ENCODE measurements at regions of chr12 and their contacts with region 1.

Region 1: DNA sequence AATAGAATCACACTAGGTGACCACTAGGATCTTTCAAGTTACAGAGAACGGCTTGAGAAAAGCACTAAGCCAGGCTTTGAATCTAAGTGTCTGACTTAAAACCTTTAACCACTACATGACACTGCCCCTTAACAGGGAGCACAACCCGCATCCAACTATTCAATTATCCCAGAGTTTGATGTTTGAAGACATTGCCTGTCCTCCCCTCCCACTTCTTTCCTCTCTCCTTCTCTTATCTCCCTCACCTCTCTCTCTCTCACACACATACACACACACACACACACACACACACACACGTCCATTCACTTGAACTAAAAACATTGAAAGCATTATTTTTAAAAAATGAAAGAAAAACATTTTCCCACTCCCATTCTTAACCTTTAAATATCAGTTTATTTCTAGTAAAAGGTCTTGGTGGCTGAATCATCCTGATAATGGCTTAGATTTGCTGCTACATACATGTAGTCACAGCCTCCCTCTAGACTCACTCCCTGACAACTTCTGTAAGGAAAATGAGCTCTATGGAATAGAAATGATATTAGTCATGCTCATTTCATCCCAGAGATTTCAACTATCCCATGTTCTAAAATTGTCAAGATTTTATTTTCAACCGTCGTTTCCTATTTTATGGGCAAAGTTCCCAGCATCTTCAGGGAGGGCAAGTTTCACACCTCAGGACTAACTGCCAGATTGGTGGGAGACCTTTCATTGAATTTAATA is 53.5 kb upstream of the RAP1B start:
- DNase-seq: peak; percentile 52
- H3K4me3 ChIP-seq: no peak overlapping the region
- H3K27ac ChIP-seq: no peak overlapping the region
- H3K4me1 ChIP-seq: peaks cover 25% of the 10 kb centered on the region
- H3K27me3 ChIP-seq: no peaks in the 10 kb centered on the region
- CTCF ChIP-seq: no peak

Region 2: DNA sequence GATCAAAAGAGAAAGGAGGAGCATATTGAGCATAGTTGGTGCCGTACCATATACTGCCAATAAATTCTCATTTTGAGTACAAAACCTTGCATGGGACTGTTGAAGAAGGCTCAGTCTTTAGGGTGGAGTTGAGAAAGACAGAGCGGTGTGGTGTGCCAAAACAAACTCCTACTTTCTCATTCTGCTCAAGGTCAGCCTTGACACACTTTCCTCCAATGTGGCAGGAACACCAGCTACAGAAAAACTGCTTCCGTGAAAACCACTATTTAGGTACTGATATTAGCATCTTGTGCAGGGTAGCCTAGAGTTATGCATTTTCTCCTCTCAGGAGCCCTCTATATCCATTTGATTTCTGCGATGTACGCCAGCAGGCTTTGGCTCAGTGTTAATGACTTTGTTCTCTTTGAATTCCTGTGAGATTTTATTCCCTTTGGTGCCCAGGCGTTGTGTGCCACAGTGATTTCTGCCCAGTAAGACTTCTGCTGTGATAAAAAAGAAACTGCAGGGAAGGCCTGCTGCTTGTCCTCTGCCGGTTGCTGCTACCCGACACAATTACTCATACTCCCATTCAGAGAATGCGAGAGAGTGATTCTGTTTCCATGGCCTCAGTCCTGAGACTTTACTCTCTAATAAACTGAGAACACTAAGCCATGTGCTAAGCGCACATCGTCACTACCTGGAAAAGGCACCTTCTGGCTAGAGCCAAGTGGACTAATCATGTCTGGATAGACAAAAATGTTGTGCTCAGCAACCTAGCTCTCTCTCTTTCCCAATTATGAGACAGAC is 136.8 kb before region 1 on chr12:
- CTCF ChIA-PET with region 1: no interaction called
- dilution Hi-C with region 1: no loop called
- in situ Hi-C with region 1: no loop called
- intact Hi-C with region 1: no loop called
- DNase-seq: no peak
- H3K4me3 ChIP-seq: no peak overlapping the region
- H3K27ac ChIP-seq: no peak overlapping the region
- H3K4me1 ChIP-seq: no peaks in the 10 kb centered on the region
- H3K27me3 ChIP-seq: no peaks in the 10 kb centered on the region
- CTCF ChIP-seq: no peak

Region 3: GRCh38 chr12:68617160-68617926 is 60.2 kb after region 1 on chr12:
- CTCF ChIA-PET with region 1: interaction called, 13 read pairs
- dilution Hi-C with region 1: no loop called
- in situ Hi-C with region 1: no loop called
- intact Hi-C with region 1: no loop called
- DNase-seq: peak; percentile 67
- H3K4me3 ChIP-seq: peak overlapping the region in 1 of 3 experiments; percentile 21
- H3K27ac ChIP-seq: peak overlapping the region; percentile 65
- H3K4me1 ChIP-seq: peaks cover 49% of the 10 kb centered on the region
- H3K27me3 ChIP-seq: no peaks in the 10 kb centered on the region
- CTCF ChIP-seq: no peak

Measured in mammary epithelial cell (primary cell).